Uterus (tissue), 4 donors: ENCODE measurements at regions of chr12 and their contacts with region 1.

Region 1: DNA sequence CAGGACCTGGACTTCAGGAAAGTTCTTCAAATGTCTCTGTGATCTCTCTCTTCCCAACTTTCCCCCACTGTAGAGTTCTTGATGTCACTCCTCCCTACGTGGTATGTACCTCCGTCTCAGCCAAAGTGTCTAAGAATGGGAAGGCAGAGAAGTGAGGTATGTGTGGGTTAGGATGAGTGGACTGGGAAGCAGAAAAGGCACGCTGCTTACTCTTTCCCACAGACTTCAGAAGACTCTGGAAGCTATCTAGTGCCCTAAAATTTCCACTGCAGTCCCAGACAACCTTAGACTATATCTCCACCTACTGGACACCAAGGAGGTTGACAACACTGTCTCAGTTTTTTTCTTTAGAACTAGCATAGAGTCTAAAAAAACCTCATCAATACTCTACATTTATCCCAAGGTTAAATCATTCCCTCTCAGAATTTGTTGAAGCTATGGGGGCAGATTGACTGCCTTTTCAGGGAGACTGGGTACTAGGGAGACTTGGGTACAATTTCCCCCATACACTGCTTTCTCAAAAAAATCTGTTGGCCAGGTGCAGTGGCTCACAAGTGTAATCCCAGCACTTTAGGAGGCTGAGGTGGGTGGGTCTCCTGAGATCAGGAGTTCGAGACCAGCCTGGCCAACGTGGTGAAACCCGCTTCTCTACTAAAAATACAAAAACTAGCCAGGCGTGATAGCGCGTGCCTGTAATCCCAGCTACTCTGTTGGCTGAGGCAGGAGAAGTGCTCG is 20.6 kb upstream of the ITGA5 start:
- DNase-seq: no peak
- H3K4me3 ChIP-seq: no peak overlapping the region
- H3K27ac ChIP-seq: peak overlapping the region; percentile 26 to 44
- H3K4me1 ChIP-seq: no peaks in the 10 kb centered on the region
- H3K27me3 ChIP-seq: no peaks in the 10 kb centered on the region
- CTCF ChIP-seq: peak; percentile 79 to 94 (median 94)
- POLR2A ChIP-seq: no peak

Region 2: GRCh38 chr12:54398995-54399793 is 40.5 kb before region 1 on chr12:
- intact Hi-C with region 1: loop called (anchors 2 kb)
- DNase-seq: peak; percentile 89 to 90
- H3K4me3 ChIP-seq: no peak overlapping the region
- H3K27ac ChIP-seq: peak overlapping the region in 1 of 2 donors; percentile 1
- H3K4me1 ChIP-seq: no peaks in the 10 kb centered on the region
- H3K27me3 ChIP-seq: no peaks in the 10 kb centered on the region
- CTCF ChIP-seq: peak; percentile 98 to 99 (median 98)
- POLR2A ChIP-seq: no peak